ENCODE measurements at regions of chr12 and their contacts with region 1.

Region 1: GRCh38 chr12:117236456-117237001 is 46.3 kb upstream of the FBXO21 start:
- DNase-seq: no peak
- ATAC-seq: peak; percentile 89
- H3K4me3 ChIP-seq: no peak overlapping the region
- H3K27ac ChIP-seq: no peak overlapping the region
- H3K4me1 ChIP-seq: no peaks in the 10 kb centered on the region
- H3K27me3 ChIP-seq: peaks cover 3 to 6% of the 10 kb centered on the region in 2 experiments; a peak in 3 of 4 replicates
- CTCF ChIP-seq: peak; percentile 70 to 84 (median 78)
- EP300 ChIP-seq: no peak
- POLR2A ChIP-seq: no peak
- RAD21 ChIP-seq: peak; percentile 60

Region 2: GRCh38 chr12:117333331-117333881 is 96.9 kb after region 1 on chr12:
- CTCF ChIA-PET with region 1: no interaction called
- POLR2A ChIA-PET with region 1: no interaction called
- RAD21 ChIA-PET with region 1: no interaction called
- SMC1A ChIA-PET with region 1: no interaction called
- in situ Hi-C with region 1: no loop called
- intact Hi-C with region 1: loop called (anchors 10 kb)
- DNase-seq: no peak
- ATAC-seq: peak; percentile 41; the same call in 1 of the 3 replicates
- H3K4me3 ChIP-seq: no peak overlapping the region
- H3K27ac ChIP-seq: no peak overlapping the region
- H3K4me1 ChIP-seq: no peaks in the 10 kb centered on the region
- H3K27me3 ChIP-seq: peaks cover 0 to 1% of the 10 kb centered on the region in 2 experiments; a peak in 1 of 4 replicates
- CTCF ChIP-seq: no peak
- EP300 ChIP-seq: no peak
- POLR2A ChIP-seq: no peak
- RAD21 ChIP-seq: no peak

Region 3: DNA sequence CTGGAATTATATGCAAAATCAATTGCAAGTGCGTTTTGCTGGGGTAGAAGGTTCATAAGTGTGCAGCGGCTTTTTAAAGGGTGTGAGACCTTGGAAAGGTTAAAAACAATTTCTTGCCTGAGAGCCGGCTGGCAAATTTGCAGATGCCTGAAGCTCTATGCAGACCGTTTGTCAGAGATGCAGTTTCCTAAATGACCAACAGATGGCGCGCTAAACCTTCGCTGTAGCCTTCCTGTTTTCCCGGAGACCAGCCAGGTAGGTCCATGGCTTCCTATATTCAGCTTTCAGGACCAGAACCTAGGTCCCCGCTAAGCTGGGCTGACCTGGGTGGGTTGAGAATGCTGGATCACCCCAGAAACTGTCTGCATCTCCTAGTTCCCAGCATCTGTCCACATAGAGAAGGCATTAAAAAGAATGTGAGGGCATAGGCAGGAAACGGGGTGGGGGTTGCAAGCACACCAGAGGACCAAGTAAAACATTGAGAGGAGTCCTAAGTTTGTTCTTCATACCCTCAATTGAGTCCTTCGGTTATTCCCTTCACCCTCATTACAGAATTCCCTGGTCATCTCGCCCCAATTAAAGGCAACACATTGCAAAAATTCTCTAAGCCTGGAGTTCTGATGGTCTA is 130.6 kb after region 1 on chr12:
- CTCF ChIA-PET with region 1: interaction called, 12 read pairs
- POLR2A ChIA-PET with region 1: no interaction called
- RAD21 ChIA-PET with region 1: no interaction called
- SMC1A ChIA-PET with region 1: interaction called, 4 read pairs
- in situ Hi-C with region 1: no loop called
- intact Hi-C with region 1: no loop called
- DNase-seq: peak; percentile 12
- ATAC-seq: peak; percentile 78
- H3K4me3 ChIP-seq: no peak overlapping the region
- H3K27ac ChIP-seq: no peak overlapping the region
- H3K4me1 ChIP-seq: no peaks in the 10 kb centered on the region
- H3K27me3 ChIP-seq: peaks cover 0 to 2% of the 10 kb centered on the region in 2 experiments; a peak in 1 of 4 replicates
- CTCF ChIP-seq: peak; percentile 83 to 87 (median 86)
- EP300 ChIP-seq: no peak
- POLR2A ChIP-seq: no peak
- RAD21 ChIP-seq: peak; percentile 89

Region 4: GRCh38 chr12:117587631-117588287 is 351.2 kb after region 1 on chr12:
- CTCF ChIA-PET with region 1: interaction called, 6 read pairs
- POLR2A ChIA-PET with region 1: no interaction called
- RAD21 ChIA-PET with region 1: interaction called, 7 read pairs
- SMC1A ChIA-PET with region 1: interaction called, 3 read pairs
- in situ Hi-C with region 1: no loop called
- intact Hi-C with region 1: loop called (anchors 2 kb)
- DNase-seq: no peak
- ATAC-seq: peak; percentile 82
- H3K4me3 ChIP-seq: no peak overlapping the region
- H3K27ac ChIP-seq: no peak overlapping the region
- H3K4me1 ChIP-seq: no peaks in the 10 kb centered on the region
- H3K27me3 ChIP-seq: peaks cover 0 to 2% of the 10 kb centered on the region in 2 experiments; a peak in 2 of 4 replicates
- CTCF ChIP-seq: peak; percentile 84 to 91 (median 86)
- EP300 ChIP-seq: no peak
- POLR2A ChIP-seq: no peak
- RAD21 ChIP-seq: peak; percentile 61

Region 5: DNA sequence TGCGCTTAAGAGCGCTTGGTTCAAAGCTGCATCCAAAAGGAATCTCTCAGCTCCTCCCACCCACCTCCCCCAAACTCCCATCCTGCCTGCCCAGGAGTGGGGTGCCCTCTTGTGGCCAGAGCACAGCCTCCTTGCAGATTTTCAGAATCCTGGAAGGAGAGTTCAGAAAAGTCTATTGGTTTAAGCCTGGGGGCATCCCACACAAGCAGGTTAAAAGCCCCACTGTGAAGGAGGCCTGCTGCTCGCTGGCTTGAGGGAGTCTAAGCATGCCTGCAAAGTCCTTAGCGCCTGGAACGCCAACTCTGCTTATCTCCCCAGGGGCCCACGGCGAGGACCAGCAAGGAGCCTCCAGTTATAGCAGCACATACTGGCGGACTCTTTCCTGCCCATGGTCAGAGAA is 435.2 kb after region 1 on chr12:
- CTCF ChIA-PET with region 1: interaction called, 3 read pairs
- POLR2A ChIA-PET with region 1: no interaction called
- RAD21 ChIA-PET with region 1: no interaction called
- SMC1A ChIA-PET with region 1: no interaction called
- in situ Hi-C with region 1: no loop called
- intact Hi-C with region 1: loop called (anchors 2 kb)
- DNase-seq: no peak
- ATAC-seq: no peak
- H3K4me3 ChIP-seq: no peak overlapping the region
- H3K27ac ChIP-seq: no peak overlapping the region
- H3K4me1 ChIP-seq: no peaks in the 10 kb centered on the region
- H3K27me3 ChIP-seq: no peaks in the 10 kb centered on the region; a peak in 1 of 4 replicates
- CTCF ChIP-seq: peak; percentile 45 to 59 (median 59)
- EP300 ChIP-seq: no peak
- POLR2A ChIP-seq: no peak
- RAD21 ChIP-seq: peak; percentile 52

Region 6: DNA sequence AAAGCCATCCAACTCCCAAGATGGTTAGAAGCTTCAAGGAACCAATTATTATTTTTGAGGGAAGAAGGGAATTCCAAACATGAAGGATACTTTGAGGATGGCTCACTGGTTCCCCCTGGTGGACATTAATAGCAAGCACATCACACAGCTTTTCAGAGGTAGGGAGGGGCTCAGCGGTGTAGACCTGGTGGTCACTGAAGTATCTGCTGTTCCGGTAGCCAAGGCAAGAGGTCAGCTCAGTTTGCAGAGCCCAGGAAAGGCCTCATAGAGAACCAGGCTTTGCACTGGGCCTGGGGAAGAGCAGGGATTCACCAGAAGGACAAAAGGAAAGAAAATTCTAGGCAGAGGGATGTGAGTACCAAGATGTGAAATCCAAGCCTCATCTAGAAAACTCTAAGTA is 613.5 kb after region 1 on chr12:
- CTCF ChIA-PET with region 1: interaction called, 15 read pairs
- POLR2A ChIA-PET with region 1: no interaction called
- RAD21 ChIA-PET with region 1: no interaction called
- SMC1A ChIA-PET with region 1: interaction called, 3 read pairs
- in situ Hi-C with region 1: no loop called
- intact Hi-C with region 1: no loop called
- DNase-seq: no peak
- ATAC-seq: peak; percentile 65
- H3K4me3 ChIP-seq: no peak overlapping the region
- H3K27ac ChIP-seq: no peak overlapping the region
- H3K4me1 ChIP-seq: peaks cover 6% of the 10 kb centered on the region; the same call in 1 of the 2 replicates
- H3K27me3 ChIP-seq: no peaks in the 10 kb centered on the region
- CTCF ChIP-seq: peak; percentile 67 to 94 (median 82)
- EP300 ChIP-seq: no peak
- POLR2A ChIP-seq: no peak
- RAD21 ChIP-seq: peak; percentile 46